A549 (cell line): ENCODE measurements at regions of chr4 and their contacts with region 1.

Region 1: DNA sequence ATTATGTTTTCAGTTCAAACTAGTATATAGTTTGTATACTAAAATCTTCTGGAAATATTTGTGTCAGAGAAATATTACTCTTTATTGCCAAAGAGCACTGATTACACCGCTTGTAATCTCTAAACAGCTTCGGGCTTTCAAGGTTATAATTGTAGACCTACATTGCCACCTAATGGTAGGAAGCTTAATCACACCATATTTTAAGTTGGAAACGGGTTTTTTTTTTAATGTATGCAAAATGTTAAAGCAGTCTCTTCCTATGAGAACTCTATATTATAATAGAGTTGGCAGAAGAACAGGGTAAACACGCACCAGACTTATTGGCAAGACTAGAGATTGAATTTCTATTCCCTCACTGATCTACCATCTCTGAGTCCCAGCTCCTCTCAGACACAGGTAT is 19.5 kb upstream of the NFXL1 start:
- DNase-seq: peak; percentile 5 to 28
- ATAC-seq: no peak; a peak in 1 of 6 replicates
- H3K4me3 ChIP-seq: no peak overlapping the region
- H3K27ac ChIP-seq: no peak overlapping the region
- H3K4me1 ChIP-seq: no peaks in the 10 kb centered on the region
- CTCF ChIP-seq: peak; percentile 57
- EP300 ChIP-seq: no peak
- POLR2A ChIP-seq: no peak
- RAD21 ChIP-seq: peak; percentile 56 to 68

Region 2: DNA sequence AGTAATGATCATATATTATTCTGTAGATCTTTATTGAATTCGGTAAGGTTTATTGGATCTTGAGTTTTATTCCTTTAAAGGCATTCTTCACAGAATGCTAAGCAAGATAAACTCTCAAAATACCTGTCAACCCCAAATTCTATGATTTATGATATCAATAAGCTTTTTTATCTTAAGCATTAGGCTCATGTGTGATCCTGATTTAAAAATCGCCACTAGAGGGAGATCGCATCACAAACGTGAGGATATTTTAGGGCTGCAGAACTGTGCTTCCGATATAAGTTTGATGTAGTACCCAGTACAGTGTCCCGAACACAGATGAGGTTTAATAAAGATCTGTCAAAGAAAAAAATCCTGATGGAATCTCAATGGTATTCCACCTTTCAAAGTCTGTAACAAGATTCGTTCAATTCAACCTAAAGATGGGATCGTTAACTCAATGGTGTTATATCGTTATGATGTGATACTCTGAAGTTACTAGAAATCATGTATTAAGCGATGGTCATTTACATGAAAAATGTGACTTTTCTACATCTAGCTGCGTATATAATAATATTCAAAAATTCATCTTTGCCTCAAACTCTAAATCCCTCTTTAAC is 264.9 kb before region 1 on chr4:
- CTCF ChIA-PET with region 1: interaction called, 14 read pairs
- POLR2A ChIA-PET with region 1: no interaction called
- DNase-seq: peak; percentile 3 to 44
- ATAC-seq: peak; percentile 68 to 85; a peak in 4 of 6 replicates
- H3K4me3 ChIP-seq: no peak overlapping the region
- H3K27ac ChIP-seq: no peak overlapping the region
- H3K4me1 ChIP-seq: no peaks in the 10 kb centered on the region
- CTCF ChIP-seq: peak; percentile 57
- EP300 ChIP-seq: no peak
- POLR2A ChIP-seq: no peak
- RAD21 ChIP-seq: peak; percentile 45 to 52

Region 3: GRCh38 chr4:47704693-47705325 is 229.0 kb before region 1 on chr4:
- CTCF ChIA-PET with region 1: interaction called, 12 read pairs
- POLR2A ChIA-PET with region 1: no interaction called
- DNase-seq: peak in 1 of 2 experiments; percentile 30
- ATAC-seq: peak; percentile 87 to 91
- H3K4me3 ChIP-seq: no peak overlapping the region
- H3K27ac ChIP-seq: no peak overlapping the region
- H3K4me1 ChIP-seq: no peaks in the 10 kb centered on the region
- CTCF ChIP-seq: no peak; the same call in 2 of the 3 replicates
- EP300 ChIP-seq: no peak
- POLR2A ChIP-seq: no peak
- RAD21 ChIP-seq: peak in 1 of 2 experiments; percentile 42; a peak in 3 of 5 replicates

Region 4: GRCh38 chr4:48141048-48141447 is 207.2 kb after region 1 on chr4:
- CTCF ChIA-PET with region 1: no interaction called
- POLR2A ChIA-PET with region 1: no interaction called
- DNase-seq: peak; percentile 17 to 33
- ATAC-seq: peak in 1 of 2 experiments; percentile 73; a peak in 2 of 6 replicates
- H3K4me3 ChIP-seq: no peak overlapping the region
- H3K27ac ChIP-seq: no peak overlapping the region
- H3K4me1 ChIP-seq: no peaks in the 10 kb centered on the region; the same call in 2 of the 3 replicates
- CTCF ChIP-seq: peak; percentile 50
- EP300 ChIP-seq: no peak
- POLR2A ChIP-seq: no peak
- RAD21 ChIP-seq: peak; percentile 49 to 50; a peak in 4 of 5 replicates